Mammary epithelial cell (primary cell): ENCODE measurements at regions of chr16 and their contacts with region 1.

Region 1: GRCh38 chr16:73878611-73879010 is 418.0 kb upstream of the PSMD7 start:
- DNase-seq: peak; percentile 35
- H3K4me3 ChIP-seq: no peak overlapping the region
- H3K27ac ChIP-seq: no peak overlapping the region
- H3K4me1 ChIP-seq: no peaks in the 10 kb centered on the region
- H3K27me3 ChIP-seq: peaks cover 3% of the 10 kb centered on the region
- CTCF ChIP-seq: peak; percentile 33 to 75

Region 2: DNA sequence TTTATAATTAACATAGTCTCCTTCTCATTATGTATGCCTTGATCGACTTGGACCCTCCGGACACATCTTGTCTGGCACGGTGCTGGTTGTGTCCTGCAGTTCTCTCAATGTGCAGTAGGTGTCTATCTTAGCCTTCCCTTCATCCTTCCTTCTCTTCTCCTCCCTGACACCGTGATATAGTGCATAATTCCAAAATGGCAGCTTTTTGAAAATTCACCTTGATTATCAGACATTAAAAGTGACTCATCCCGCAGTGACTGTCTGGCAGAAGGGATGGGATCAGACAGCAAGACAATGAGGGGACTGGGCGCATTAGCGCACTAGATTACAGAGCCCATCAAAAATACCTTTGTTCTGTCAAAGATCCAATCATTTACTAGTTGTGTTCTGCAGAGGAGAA is 1636.7 kb before region 1 on chr16:
- CTCF ChIA-PET with region 1: no interaction called
- dilution Hi-C with region 1: no loop called
- in situ Hi-C with region 1: loop called in 1 of 2 experiments (anchors 25 kb)
- intact Hi-C with region 1: loop called (anchors 5 kb)
- DNase-seq: peak; percentile 48
- H3K4me3 ChIP-seq: no peak overlapping the region
- H3K27ac ChIP-seq: no peak overlapping the region
- H3K4me1 ChIP-seq: peaks cover 4% of the 10 kb centered on the region
- H3K27me3 ChIP-seq: no peaks in the 10 kb centered on the region
- CTCF ChIP-seq: peak; percentile 94 to 97

Region 3: DNA sequence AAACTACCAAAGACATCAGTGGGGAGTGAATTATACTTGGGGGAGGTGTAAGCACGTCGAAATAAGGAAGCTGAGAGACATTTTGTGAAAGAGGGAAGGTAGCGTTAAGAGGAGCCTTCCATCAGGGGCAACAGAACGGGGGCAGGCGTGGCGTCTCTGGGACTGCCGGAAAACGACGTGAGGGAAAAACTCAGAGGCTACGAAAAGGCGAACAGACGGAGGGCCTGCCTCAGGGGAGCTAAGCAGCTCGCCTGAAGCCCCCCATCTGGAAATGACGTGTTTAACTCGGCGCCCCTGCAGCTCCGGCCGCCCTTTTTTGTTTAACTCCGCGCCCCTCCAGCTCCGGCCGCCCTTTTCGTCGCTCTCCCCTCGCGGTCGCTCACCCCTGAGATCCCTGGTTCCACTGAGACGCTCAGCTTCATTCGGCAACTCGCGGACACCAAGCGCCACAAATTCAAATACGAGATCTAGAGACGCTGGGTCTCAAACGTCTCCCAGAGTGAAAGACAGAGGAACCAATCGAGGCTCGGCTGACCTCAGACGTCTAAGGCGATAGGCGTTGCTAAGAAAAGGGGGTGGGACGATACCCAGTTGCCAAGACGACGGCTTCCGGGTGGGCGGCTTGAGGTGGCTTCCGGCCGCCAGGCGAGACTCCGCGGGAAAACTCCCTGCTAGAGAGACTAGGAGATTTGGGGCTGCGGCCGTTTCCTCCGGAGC is 1213.9 kb before region 1 on chr16:
- CTCF ChIA-PET with region 1: interaction called, 4 read pairs
- dilution Hi-C with region 1: no loop called
- in situ Hi-C with region 1: no loop called
- intact Hi-C with region 1: loop called (anchors 10 kb)
- DNase-seq: peak; percentile 98
- H3K4me3 ChIP-seq: peak overlapping the region; percentile 74 to 85 (median 81)
- H3K27ac ChIP-seq: peak overlapping the region; percentile 86
- H3K4me1 ChIP-seq: peaks cover 10% of the 10 kb centered on the region
- H3K27me3 ChIP-seq: no peaks in the 10 kb centered on the region
- CTCF ChIP-seq: no peak

Region 4: GRCh38 chr16:73058221-73058615 is 820.4 kb before region 1 on chr16:
- CTCF ChIA-PET with region 1: no interaction called
- dilution Hi-C with region 1: no loop called
- in situ Hi-C with region 1: no loop called
- intact Hi-C with region 1: loop called (anchors 10 kb)
- DNase-seq: peak; percentile 54
- H3K4me3 ChIP-seq: peak overlapping the region; percentile 55 to 64 (median 61)
- H3K27ac ChIP-seq: no peak overlapping the region
- H3K4me1 ChIP-seq: peaks cover 47% of the 10 kb centered on the region
- H3K27me3 ChIP-seq: no peaks in the 10 kb centered on the region
- CTCF ChIP-seq: no peak

Region 5: DNA sequence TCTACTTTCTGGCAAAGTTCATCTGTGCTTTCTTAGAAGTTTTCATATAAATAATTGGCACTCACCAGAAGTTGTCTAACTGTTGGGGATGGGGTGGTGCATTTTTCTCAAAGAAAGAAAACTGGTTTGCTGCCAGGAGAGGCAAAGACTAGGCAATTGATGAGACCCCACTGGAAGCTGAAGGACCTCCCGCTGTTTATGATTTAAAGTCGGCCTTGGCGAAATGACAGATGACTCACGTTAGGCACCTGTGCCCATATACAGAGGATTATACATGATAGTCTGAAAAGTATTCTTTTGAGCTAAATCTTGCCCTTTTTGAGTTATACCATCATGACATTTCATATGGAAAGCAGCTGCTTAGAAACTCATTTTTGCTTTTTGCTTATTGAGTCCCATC is 637.7 kb before region 1 on chr16:
- CTCF ChIA-PET with region 1: interaction called, 10 read pairs
- dilution Hi-C with region 1: no loop called
- in situ Hi-C with region 1: no loop called
- intact Hi-C with region 1: no loop called
- DNase-seq: no peak
- H3K4me3 ChIP-seq: no peak overlapping the region
- H3K27ac ChIP-seq: no peak overlapping the region
- H3K4me1 ChIP-seq: no peaks in the 10 kb centered on the region
- H3K27me3 ChIP-seq: no peaks in the 10 kb centered on the region
- CTCF ChIP-seq: no peak

Region 6: GRCh38 chr16:73713778-73714495 is 164.7 kb before region 1 on chr16:
- CTCF ChIA-PET with region 1: interaction called, 6 read pairs
- dilution Hi-C with region 1: no loop called
- in situ Hi-C with region 1: no loop called
- intact Hi-C with region 1: loop called (anchors 1 kb)
- DNase-seq: peak; percentile 16
- H3K4me3 ChIP-seq: no peak overlapping the region
- H3K27ac ChIP-seq: no peak overlapping the region
- H3K4me1 ChIP-seq: no peaks in the 10 kb centered on the region
- H3K27me3 ChIP-seq: no peaks in the 10 kb centered on the region
- CTCF ChIP-seq: peak; percentile 38 to 68

Region 7: GRCh38 chr16:73813527-73813926 is 65.1 kb before region 1 on chr16:
- CTCF ChIA-PET with region 1: no interaction called
- dilution Hi-C with region 1: no loop called
- in situ Hi-C with region 1: no loop called
- intact Hi-C with region 1: no loop called
- DNase-seq: no peak
- H3K4me3 ChIP-seq: no peak overlapping the region
- H3K27ac ChIP-seq: no peak overlapping the region
- H3K4me1 ChIP-seq: no peaks in the 10 kb centered on the region
- H3K27me3 ChIP-seq: no peaks in the 10 kb centered on the region
- CTCF ChIP-seq: no peak

Region 8: DNA sequence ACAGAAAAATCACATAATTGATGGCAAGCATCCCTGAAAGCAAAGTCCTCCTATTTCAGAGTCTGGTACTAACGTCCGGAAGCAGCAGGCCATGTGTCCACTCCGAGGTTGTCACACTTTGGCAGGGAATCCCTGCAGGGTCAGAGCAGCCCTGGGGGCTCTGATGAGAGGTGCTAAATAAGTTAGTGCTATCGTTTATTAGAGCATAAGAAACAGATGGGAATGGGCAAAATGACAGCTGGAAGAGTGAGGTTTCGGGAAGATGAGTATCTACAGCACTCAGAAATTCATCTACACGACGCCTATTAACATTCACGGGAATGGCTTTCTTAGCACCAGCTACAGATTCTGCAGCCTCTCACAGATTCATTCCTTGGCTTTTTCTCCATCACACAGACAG is 47.4 kb before region 1 on chr16:
- CTCF ChIA-PET with region 1: no interaction called
- dilution Hi-C with region 1: no loop called
- in situ Hi-C with region 1: no loop called
- intact Hi-C with region 1: no loop called
- DNase-seq: no peak
- H3K4me3 ChIP-seq: no peak overlapping the region
- H3K27ac ChIP-seq: no peak overlapping the region
- H3K4me1 ChIP-seq: no peaks in the 10 kb centered on the region
- H3K27me3 ChIP-seq: no peaks in the 10 kb centered on the region
- CTCF ChIP-seq: no peak